GM13976 (cell line): ENCODE measurements at regions of chr21 and their contacts with region 1.

Region 1: DNA sequence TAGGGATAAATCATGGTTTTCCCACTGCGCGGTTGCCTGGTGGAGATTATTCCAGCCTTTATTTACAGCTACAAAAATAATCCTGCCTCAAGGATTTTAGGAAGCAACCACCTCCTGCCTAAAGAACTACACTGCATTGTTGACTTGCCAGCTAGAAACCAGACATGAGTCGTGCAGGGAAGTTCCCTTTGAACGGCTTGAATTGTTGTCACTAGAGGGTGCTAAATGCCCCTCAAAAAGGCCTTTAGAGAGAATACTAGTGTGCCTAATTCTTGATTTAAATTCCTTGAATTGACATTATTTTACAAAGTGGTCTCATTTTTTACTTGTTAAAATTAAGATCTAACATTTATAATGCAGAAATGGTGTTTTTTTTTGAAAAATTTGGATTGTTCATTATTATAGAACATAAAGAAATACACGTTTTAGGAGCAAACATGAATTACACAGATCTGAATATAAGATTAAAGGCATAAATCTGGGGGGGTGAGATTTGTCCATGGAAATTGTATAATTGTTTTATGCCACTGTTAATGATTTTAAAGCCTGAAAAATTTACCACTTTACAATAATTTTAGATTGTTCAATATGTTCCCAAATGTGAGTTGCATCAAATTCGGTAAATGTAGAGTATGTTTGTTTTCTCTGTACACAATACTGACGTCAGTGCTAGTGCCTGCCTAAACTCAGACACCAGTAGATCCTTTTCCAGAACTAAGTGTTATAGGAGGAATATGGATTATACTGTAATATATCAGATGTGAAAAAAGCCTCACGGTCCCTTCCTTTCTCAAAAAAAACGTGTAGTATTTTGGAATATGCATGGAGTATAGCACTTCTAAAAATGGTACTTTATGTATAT is 7.6 kb upstream of the ERG start:
- DNase-seq: peak; percentile 39
- CTCF ChIP-seq: peak; percentile 53

Region 2: GRCh38 chr21:39125752-39126485 is 620.0 kb after region 1 on chr21:
- in situ Hi-C with region 1: loop called (anchors 25 kb)
- DNase-seq: peak; percentile 56
- CTCF ChIP-seq: peak; percentile 49